Activated CD8-positive, alpha-beta T cell treated with anti-CD3 and anti-CD28 coated beads for 36 hours (primary cell): ENCODE measurements at regions of chr6 and their contacts with region 1.

Region 1: GRCh38 chr6:15327271-15327670 is 81.4 kb downstream of the JARID2 start:
- DNase-seq: peak; percentile 82
- ATAC-seq: peak; percentile 70
- H3K4me3 Mint-ChIP-seq: no peak overlapping the region
- H3K27ac Mint-ChIP-seq: peak overlapping the region; percentile 81
- H3K4me1 Mint-ChIP-seq: peaks cover 89% of the 10 kb centered on the region
- H3K27me3 Mint-ChIP-seq: no peaks in the 10 kb centered on the region
- CTCF ChIP-seq: peak; percentile 37

Region 2: GRCh38 chr6:14966096-14966905 is 361.0 kb before region 1 on chr6:
- CTCF ChIA-PET with region 1: no interaction called
- POLR2A ChIA-PET with region 1: no interaction called
- intact Hi-C with region 1: no loop called
- DNase-seq: no peak
- ATAC-seq: no peak
- H3K4me3 Mint-ChIP-seq: no peak overlapping the region
- H3K27ac Mint-ChIP-seq: no peak overlapping the region
- H3K4me1 Mint-ChIP-seq: no peaks in the 10 kb centered on the region
- H3K27me3 Mint-ChIP-seq: no peaks in the 10 kb centered on the region
- CTCF ChIP-seq: no peak

Region 3: GRCh38 chr6:15218401-15218800 is 108.9 kb before region 1 on chr6:
- CTCF ChIA-PET with region 1: no interaction called
- POLR2A ChIA-PET with region 1: no interaction called
- intact Hi-C with region 1: no loop called
- DNase-seq: no peak
- ATAC-seq: no peak
- H3K4me3 Mint-ChIP-seq: no peak overlapping the region
- H3K27ac Mint-ChIP-seq: no peak overlapping the region
- H3K4me1 Mint-ChIP-seq: no peaks in the 10 kb centered on the region
- H3K27me3 Mint-ChIP-seq: no peaks in the 10 kb centered on the region
- CTCF ChIP-seq: no peak

Region 4: DNA sequence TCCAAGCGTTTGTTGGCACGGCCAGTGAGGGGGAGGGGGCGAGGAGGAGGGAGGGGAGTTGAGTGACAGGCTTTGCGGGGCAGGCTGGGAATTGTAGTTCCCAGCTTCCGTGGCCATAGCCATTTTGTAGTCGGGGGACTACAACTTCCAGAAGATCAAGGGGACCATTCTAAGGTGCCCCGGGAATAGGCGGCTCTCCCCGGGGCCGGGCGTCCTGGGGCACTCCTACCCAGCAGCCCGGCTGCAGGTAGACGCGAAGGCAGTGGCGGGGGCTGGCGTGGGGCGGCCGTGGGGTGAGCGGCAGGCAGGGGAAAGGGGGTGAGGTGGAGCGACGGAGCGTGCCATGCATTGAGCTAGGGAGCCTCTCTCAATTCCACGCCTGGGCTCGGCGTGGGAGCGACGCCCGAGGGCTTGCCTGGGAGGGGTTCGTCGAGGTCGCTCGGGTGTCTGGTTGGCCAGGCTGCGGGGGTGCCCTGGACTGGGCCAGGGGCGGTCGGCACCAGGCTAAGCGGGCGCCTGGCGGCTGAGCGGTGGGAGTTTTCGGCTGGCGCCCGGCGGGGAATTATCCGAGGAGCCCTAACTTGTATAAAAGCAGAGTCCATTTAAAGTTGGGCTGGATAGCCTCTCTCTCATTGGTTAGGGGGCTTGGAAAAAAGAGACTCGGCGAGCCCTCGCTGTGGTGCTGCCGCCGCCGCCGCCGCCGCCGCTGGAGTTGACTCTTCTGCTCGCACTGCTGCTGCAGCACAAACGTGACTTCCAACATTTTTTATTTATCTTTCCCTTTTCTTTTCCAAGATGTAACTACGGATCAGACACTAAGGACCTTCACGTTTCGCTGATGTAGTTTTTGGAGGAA is 81.7 kb before region 1 on chr6 and contains the start of gene JARID2:
- CTCF ChIA-PET with region 1: interaction called, 4 read pairs
- POLR2A ChIA-PET with region 1: interaction called, 4 read pairs
- intact Hi-C with region 1: loop called (anchors 5 kb)
- DNase-seq: peak; percentile 99
- ATAC-seq: peak; percentile 66
- H3K4me3 Mint-ChIP-seq: peak within 1 kb of the TSS; percentile 100
- H3K27ac Mint-ChIP-seq: peak within 1 kb of the TSS; percentile 97
- H3K4me1 Mint-ChIP-seq: peaks cover 18% of the 10 kb centered on the region
- H3K27me3 Mint-ChIP-seq: no peaks in the 10 kb centered on the region
- CTCF ChIP-seq: no peak
- total RNA-seq, gene JARID2: 25.4 to 25.5 TPM